ENCODE measurements at regions of chr15 and their contacts with region 1.

Region 1: DNA sequence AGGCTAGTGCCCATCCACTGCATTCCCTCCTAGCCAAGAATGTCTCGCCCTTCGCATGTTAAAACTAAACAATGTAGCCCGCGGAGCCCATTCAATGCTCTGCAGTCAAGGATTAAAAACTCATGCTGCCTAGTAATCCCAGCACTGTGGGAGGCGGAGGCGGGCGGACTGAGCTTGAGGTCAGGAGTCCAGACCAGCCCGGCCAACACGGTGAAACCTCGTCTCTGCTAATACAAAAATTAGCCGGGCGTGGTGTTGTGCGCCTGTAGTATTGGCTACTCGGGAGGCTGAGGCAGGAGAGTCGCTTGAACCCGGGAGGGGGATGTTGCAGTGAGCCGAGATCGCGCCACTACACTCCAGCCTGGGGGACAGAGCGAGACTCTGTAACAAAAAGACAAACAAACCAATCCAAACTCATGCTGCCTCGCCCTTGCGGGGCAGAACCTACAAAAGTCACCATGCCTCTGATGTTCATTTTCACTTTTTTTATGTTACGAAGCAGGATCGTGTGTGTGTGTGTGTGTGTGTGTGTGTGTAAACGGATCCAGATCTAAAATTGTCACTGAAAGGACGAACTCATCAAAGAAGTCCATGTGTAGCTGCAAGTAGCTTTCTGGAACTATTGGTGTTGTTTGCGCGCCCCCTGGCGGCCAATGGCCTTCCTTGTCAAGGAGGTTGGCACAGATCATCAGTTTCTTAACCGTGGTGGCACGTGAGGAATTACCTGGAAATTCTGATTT is 54.8 kb upstream of the SPESP1 start:
- DNase-seq: peak; percentile 92
- H3K4me3 Mint-ChIP-seq: no peak overlapping the region
- H3K27ac Mint-ChIP-seq: no peak overlapping the region
- H3K4me1 Mint-ChIP-seq: peaks cover 4% of the 10 kb centered on the region
- H3K27me3 Mint-ChIP-seq: peaks cover 19% of the 10 kb centered on the region

Region 2: GRCh38 chr15:68550481-68551295 is 324.9 kb before region 1 on chr15:
- CTCF ChIA-PET with region 1: interaction called, 49 read pairs
- POLR2A ChIA-PET with region 1: no interaction called
- intact Hi-C with region 1: loop called (anchors 5 kb)
- DNase-seq: peak; percentile 81
- H3K4me3 Mint-ChIP-seq: no peak overlapping the region
- H3K27ac Mint-ChIP-seq: no peak overlapping the region
- H3K4me1 Mint-ChIP-seq: peaks cover 6% of the 10 kb centered on the region
- H3K27me3 Mint-ChIP-seq: peaks cover 49% of the 10 kb centered on the region

Region 3: DNA sequence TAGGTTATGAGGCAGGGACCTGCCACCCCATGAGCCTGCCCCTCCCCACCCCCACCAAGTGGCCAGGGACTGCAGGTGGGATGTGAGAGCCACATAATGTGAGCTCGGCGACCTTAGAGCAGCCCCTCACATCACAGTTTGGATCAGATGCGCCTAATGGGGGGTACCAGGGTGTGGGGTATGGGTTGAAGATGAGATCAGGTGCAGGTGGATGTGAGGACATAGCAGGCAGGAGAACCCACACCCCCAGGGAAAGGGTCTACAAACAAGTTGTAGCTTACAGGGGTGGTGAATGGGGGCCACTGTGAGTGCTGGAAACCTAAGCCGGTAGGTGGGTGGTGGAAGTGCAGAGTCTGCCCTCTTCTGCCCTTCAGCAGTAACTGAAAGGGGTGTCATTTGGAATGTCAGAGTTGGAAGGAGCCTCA is 202.8 kb before region 1 on chr15:
- CTCF ChIA-PET with region 1: interaction called, 23 read pairs
- POLR2A ChIA-PET with region 1: no interaction called
- intact Hi-C with region 1: loop called (anchors 5 kb)
- DNase-seq: no peak
- H3K4me3 Mint-ChIP-seq: no peak overlapping the region
- H3K27ac Mint-ChIP-seq: no peak overlapping the region
- H3K4me1 Mint-ChIP-seq: peaks cover 2% of the 10 kb centered on the region
- H3K27me3 Mint-ChIP-seq: peaks cover 16% of the 10 kb centered on the region

Region 4: GRCh38 chr15:68783226-68784058 is 92.1 kb before region 1 on chr15:
- CTCF ChIA-PET with region 1: interaction called, 58 read pairs
- POLR2A ChIA-PET with region 1: no interaction called
- intact Hi-C with region 1: loop called (anchors 1 kb)
- DNase-seq: peak; percentile 72
- H3K4me3 Mint-ChIP-seq: no peak overlapping the region
- H3K27ac Mint-ChIP-seq: peak overlapping the region; percentile 88
- H3K4me1 Mint-ChIP-seq: peaks cover 23% of the 10 kb centered on the region
- H3K27me3 Mint-ChIP-seq: no peaks in the 10 kb centered on the region

Region 5: GRCh38 chr15:68829068-68829467 is 46.5 kb before region 1 on chr15:
- CTCF ChIA-PET with region 1: interaction called, 10 read pairs
- POLR2A ChIA-PET with region 1: no interaction called
- intact Hi-C with region 1: no loop called
- DNase-seq: peak; percentile 32
- H3K4me3 Mint-ChIP-seq: no peak overlapping the region
- H3K27ac Mint-ChIP-seq: no peak overlapping the region
- H3K4me1 Mint-ChIP-seq: peaks cover 14% of the 10 kb centered on the region
- H3K27me3 Mint-ChIP-seq: peaks cover 3% of the 10 kb centered on the region

Region 6: DNA sequence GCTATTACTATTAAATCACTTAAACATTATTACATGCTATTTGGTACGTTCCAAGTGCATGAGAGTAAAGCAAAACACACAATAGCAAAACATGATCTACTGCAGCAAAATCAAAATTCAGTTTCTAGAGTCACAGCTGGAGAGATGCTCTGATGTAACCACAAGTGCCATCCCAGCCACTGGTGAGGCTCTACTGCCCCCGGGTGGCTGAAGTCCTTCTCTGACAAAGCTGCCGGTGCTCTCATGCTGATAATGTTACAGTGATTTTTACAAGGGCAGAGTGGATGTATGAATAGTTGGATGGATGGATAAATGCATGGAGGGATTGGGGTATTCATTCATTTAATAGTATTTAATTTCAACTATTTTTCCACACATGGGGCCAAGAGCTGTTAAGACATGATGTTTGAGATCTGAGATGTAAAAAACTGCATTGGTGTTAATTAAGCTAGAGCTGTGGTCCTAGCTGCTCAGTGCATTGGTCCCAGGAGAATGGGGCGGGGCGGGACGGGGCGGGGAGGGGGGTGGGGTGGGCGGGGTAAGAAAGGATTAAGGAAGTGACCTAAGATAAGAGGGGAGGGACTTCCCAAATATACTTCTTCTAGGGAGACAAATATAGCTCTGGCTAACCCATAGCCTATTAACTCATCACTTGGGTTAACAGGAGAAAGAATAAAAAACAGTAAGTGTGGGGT is 49.5 kb after region 1 on chr15:
- CTCF ChIA-PET with region 1: interaction called, 21 read pairs
- POLR2A ChIA-PET with region 1: no interaction called
- intact Hi-C with region 1: loop called (anchors 1 kb)
- DNase-seq: peak; percentile 75
- H3K4me3 Mint-ChIP-seq: no peak overlapping the region
- H3K27ac Mint-ChIP-seq: no peak overlapping the region
- H3K4me1 Mint-ChIP-seq: no peaks in the 10 kb centered on the region
- H3K27me3 Mint-ChIP-seq: peaks cover 17% of the 10 kb centered on the region